ENCODE measurements at regions of chr7 and their contacts with region 1.

Region 1: DNA sequence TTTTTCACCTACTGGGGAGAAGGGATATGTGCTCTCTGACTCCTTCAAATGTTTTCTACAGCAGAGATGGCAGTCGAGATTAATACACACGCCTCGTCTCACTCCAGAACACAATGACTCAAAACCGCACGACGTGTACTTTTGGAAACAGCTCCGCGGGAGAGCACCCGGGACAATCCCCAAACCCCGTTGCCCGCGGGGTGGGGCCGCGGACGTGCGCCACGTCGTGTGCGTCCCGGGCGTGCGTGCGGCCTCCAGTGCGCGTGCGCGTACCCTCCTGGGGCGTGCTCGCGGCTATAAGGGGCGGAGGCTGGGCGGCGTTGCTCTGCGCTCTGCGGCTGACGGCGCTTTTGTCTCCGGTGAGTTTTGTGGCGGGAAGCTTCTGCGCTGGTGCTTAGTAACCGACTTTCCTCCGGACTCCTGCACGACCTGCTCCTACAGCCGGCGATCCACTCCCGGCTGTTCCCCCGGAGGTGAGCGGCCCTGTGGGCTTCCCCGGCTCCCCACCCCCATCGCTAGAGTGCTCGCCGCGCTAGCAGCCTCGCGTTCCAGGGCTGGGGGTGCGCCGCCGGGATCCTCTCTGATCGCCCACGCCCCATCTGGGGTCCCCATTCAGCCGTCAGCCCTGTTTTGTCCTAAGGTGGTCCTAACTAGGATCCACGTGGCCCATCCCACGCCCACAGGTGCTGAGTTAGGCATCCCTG is at the start of gene HILPDA:
- DNase-seq: peak; percentile 82
- ATAC-seq: peak; percentile 63
- H3K4me3 Mint-ChIP-seq: peak within 1 kb of the TSS; percentile 95
- H3K27ac Mint-ChIP-seq: peak within 1 kb of the TSS; percentile 92
- H3K4me1 Mint-ChIP-seq: peaks cover 69% of the 10 kb centered on the region
- H3K27me3 Mint-ChIP-seq: peaks cover 12% of the 10 kb centered on the region
- CTCF ChIP-seq: no peak
- total RNA-seq, gene HILPDA: 28.3 to 29.5 TPM (median 28.7 TPM) in 3 replicates

Region 2: DNA sequence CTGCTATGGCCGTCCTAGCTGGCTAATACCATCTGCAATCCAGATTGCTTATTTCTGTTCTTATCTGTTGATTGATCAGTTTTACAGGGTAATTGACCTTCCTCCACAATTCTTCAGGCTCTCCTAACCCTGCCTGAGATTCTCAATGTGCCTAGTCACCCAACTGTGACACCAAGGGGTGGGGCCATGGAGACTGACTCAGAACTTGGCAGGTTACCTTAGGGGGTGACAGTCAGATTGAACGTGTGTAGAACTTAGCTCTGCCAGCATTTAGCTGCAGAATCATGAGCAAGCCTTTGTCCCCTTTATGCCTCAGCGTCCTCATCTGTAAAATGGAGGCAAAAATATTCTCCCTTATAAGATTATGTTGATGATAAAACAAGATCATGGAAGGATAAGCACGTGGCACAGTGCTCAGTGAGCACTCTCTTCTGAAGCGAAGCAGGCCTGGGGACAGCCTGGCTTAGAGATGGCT is 233.7 kb before region 1 on chr7:
- CTCF ChIA-PET with region 1: no interaction called
- POLR2A ChIA-PET with region 1: no interaction called
- DNase-seq: no peak
- ATAC-seq: no peak
- H3K4me3 Mint-ChIP-seq: no peak overlapping the region
- H3K27ac Mint-ChIP-seq: no peak overlapping the region
- H3K4me1 Mint-ChIP-seq: peaks cover 8% of the 10 kb centered on the region
- H3K27me3 Mint-ChIP-seq: peaks cover 41% of the 10 kb centered on the region
- CTCF ChIP-seq: no peak

Region 3: DNA sequence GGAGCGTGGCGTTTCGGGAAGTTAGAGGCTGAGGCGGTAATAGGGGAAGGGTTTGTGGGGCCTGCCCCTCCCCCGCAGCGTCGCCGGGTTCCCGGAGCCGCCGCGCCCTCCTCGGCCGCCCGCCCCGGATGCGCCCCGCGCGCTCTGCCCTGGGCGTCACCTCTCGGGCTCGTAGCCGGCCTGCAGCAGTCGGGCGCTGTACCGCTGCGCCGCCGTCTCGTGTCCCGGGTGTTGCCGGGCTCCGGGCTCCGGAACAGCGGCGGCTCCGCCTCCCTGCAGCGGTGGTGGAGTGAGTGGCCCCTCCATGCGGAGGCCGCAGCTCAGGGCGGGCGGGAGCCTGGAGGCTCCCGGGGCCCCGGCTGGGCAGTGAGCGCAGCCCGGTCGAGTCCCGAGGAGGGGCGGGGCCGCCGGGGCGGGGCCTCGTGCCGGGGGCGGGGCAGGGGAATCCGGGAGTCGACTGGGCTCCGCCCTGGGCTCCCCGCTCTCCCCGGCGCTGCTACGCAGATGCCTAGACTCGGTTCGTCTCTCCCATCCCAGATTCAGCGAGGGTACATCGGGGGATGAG is 46.0 kb before region 1 on chr7 and contains the start of gene IMPDH1:
- CTCF ChIA-PET with region 1: interaction called, 18 read pairs
- POLR2A ChIA-PET with region 1: no interaction called
- DNase-seq: peak; percentile 92
- ATAC-seq: peak; percentile 82
- H3K4me3 Mint-ChIP-seq: peak within 1 kb of the TSS; percentile 91
- H3K27ac Mint-ChIP-seq: no peak within 1 kb of the TSS; the same call in 1 of the 2 replicates
- H3K4me1 Mint-ChIP-seq: peaks cover 29% of the 10 kb centered on the region
- H3K27me3 Mint-ChIP-seq: peaks cover 86% of the 10 kb centered on the region
- CTCF ChIP-seq: no peak
- total RNA-seq, gene IMPDH1: 42.8 to 54.2 TPM (median 44.1 TPM) in 3 replicates

Region 4: DNA sequence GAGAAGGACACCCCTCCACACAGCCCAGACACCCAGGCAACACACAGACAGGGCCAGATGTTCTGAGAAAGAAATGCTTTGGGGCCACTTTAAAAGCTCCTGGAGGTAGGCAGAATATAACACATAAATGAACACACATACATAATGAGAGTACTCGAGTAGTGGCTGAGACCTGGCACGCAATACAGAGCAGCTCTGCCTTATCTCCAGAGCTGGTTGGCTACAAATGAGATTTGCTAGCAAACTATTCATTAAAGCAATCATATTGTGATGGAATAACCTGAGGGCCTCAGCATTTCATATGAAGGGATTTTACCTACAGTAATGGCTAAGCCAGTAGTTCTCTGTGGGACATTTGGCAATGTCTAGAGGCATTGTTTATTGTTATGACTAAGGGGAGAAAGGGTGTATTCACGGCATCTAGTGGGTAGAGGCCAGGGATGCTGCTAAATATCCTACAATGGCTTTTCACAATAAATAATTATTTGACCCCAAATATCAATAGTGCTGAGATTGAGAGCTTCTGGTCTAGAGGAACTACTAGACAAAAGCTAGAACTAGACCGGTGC is 40.4 kb before region 1 on chr7:
- CTCF ChIA-PET with region 1: interaction called, 18 read pairs
- POLR2A ChIA-PET with region 1: no interaction called
- DNase-seq: no peak
- ATAC-seq: no peak
- H3K4me3 Mint-ChIP-seq: no peak overlapping the region
- H3K27ac Mint-ChIP-seq: no peak overlapping the region
- H3K4me1 Mint-ChIP-seq: peaks cover 2% of the 10 kb centered on the region
- H3K27me3 Mint-ChIP-seq: peaks cover 50% of the 10 kb centered on the region
- CTCF ChIP-seq: no peak

Region 5: DNA sequence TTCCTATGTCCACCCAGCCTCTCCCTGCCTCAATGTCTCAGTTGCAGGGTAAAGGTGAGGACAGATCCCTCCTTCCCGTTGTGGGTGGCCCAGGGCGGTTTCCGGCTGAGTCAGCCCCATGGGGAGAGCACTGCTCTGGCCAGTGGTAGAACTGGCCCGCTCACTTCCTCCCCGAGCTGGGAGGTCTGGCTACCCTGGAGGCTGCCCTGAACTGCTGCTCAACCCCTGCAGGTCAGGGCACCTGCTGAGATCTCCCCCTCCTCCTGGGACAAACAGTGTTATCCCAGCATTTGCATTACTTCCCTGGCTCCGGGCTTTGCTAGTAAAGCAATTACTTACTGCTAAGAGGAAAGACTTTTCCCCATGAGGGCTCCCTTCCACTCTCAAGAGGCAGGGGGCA is 24.5 kb before region 1 on chr7:
- CTCF ChIA-PET with region 1: interaction called, 199 read pairs
- POLR2A ChIA-PET with region 1: interaction called, 3 read pairs
- DNase-seq: peak; percentile 43
- ATAC-seq: peak; percentile 70
- H3K4me3 Mint-ChIP-seq: no peak overlapping the region
- H3K27ac Mint-ChIP-seq: no peak overlapping the region
- H3K4me1 Mint-ChIP-seq: peaks cover 30% of the 10 kb centered on the region
- H3K27me3 Mint-ChIP-seq: no peaks in the 10 kb centered on the region
- CTCF ChIP-seq: no peak

Region 6: DNA sequence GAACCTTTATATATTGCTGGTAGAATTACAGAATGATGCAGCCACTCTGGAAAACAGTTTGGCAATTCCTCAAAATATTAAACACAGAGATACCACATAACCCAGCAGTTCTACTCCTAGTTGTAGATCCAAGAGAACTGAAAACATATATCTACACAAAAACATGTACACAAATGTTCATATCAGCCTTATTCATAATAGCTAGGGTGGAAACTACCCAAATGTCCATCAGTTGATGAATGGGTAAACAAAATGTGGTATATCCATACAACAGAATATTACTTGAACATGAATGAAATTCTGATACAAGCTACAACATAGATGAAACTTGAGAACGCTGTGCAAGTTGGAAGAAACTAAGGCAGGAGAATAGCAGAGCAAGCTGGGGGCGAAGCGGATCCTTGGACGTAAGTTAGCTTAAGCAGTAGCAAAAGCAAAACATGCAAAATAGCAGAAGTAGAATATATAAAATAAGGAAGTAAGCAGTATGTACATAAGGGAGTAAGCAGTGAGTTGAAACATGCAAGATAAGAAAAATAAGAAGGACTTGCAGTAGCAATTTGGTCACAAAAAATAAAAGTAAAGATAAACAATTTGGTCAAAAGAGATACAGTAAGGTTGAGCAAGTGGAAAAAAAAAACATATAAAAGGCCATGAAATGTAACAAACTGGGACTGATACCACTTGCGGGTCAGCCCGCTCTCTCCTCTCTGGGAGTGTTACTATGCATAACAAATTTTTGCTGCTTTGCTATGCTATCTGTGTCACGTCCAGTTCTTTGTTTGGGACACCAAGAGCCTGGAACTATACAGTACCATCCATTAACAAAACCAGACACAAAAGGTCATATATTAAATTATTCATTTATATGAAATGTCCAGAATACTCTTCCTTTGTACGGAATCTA is 18.0 kb before region 1 on chr7:
- CTCF ChIA-PET with region 1: interaction called, 25 read pairs
- POLR2A ChIA-PET with region 1: no interaction called
- DNase-seq: no peak
- ATAC-seq: no peak
- H3K4me3 Mint-ChIP-seq: no peak overlapping the region
- H3K27ac Mint-ChIP-seq: no peak overlapping the region
- H3K4me1 Mint-ChIP-seq: peaks cover 17% of the 10 kb centered on the region
- H3K27me3 Mint-ChIP-seq: no peaks in the 10 kb centered on the region
- CTCF ChIP-seq: no peak